Testis (tissue), 5 donors: ENCODE measurements at regions of chr17 and their contacts with region 1.

Region 1: GRCh38 chr17:17681187-17681848 is at the start of gene RAI1:
- DNase-seq: peak; percentile 81
- H3K4me3 ChIP-seq: peak within 1 kb of the TSS; percentile 73 to 86
- H3K27ac ChIP-seq: peak within 1 kb of the TSS; percentile 93 to 95
- H3K4me1 ChIP-seq: peaks cover 33% of the 10 kb centered on the region
- H3K27me3 ChIP-seq: no peaks in the 10 kb centered on the region
- CTCF ChIP-seq: peak; percentile 75 to 97 (median 93)
- POLR2A ChIP-seq: no peak
- total RNA-seq, gene RAI1: 42.8 to 44.5 TPM

Region 2: GRCh38 chr17:17812211-17813057 is 131.1 kb after region 1 on chr17:
- intact Hi-C with region 1: loop called (anchors 5 kb)
- DNase-seq: peak; percentile 81
- H3K4me3 ChIP-seq: peak overlapping the region; percentile 21 to 47
- H3K27ac ChIP-seq: peak overlapping the region; percentile 47 to 50
- H3K4me1 ChIP-seq: peaks cover 28% of the 10 kb centered on the region
- H3K27me3 ChIP-seq: no peaks in the 10 kb centered on the region
- CTCF ChIP-seq: peak; percentile 99 to 100 (median 99)
- POLR2A ChIP-seq: no peak

Region 3: DNA sequence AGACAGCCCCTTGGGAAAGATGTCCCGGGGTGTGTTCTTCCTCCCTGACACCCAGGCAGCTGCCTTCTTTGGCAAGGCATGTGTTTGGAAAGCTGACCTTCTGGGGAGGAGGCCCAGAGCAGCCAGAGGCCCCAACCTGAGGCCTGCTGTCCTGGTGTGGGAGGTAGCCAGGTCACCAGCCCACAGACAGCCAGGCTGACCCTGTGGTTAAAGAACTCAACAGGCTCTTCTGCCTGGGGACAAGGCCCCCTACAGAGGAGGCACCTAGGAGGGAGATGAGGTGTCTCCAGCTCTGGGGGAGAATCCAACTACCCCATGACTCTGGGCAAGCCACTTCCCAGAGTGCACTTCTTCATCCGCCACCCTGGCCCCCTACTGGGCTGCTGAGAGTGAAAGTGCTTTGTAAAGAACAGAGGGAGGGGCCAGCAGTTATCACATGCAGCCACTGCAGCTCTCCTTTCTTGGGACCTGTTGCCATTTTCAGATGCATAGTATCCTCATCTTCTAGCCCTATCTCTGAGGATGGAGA is 168.6 kb after region 1 on chr17:
- intact Hi-C with region 1: loop called (anchors 5 kb)
- DNase-seq: peak; percentile 82
- H3K4me3 ChIP-seq: no peak overlapping the region
- H3K27ac ChIP-seq: peak overlapping the region; percentile 47 to 59
- H3K4me1 ChIP-seq: peaks cover 37% of the 10 kb centered on the region
- H3K27me3 ChIP-seq: no peaks in the 10 kb centered on the region
- CTCF ChIP-seq: peak in 2 of 3 experiments; percentile 13 to 44
- POLR2A ChIP-seq: peak; percentile 2

Region 4: DNA sequence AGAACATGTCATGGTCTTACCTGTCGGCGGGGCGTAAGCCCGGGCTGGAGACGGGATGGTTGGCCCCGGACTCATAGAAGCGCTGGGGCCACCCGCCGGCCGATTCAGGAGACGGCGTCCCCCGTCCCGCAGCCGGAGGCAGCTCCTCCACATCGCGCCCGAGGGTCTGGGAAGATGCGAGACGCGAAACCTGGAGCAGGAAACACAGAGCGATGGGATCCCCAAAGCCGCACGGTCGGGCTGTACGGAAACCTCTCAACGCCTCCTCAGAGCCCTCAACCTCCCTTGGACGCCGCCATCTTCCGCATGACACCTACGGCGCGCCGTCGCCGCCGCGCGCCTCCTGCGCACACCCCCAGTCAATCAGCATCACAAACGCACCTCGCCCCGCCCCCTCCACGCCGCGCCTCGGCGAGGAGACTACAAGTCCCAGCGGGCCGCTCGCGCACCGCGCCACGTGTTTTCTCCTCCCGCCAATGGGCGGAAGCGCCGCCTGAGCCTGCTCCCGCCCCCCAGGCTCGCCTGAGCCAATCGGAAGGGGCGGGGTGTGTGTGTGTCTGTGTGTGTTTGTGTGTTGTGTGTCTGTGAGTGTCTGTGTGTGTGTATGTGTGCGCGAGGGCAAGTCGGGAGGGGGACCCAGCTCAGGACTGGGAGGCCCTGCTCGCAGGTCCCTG is 357.7 kb after region 1 on chr17 and contains the starts of genes ATPAF2 and GID4:
- intact Hi-C with region 1: loop called (anchors 10 kb)
- DNase-seq: peak; percentile 100
- H3K4me3 ChIP-seq: peak within 1 kb of the TSS; percentile 75 to 83
- H3K27ac ChIP-seq: peak within 1 kb of the TSS; percentile 82 to 83
- H3K4me1 ChIP-seq: peaks cover 24% of the 10 kb centered on the region
- H3K27me3 ChIP-seq: no peaks in the 10 kb centered on the region
- CTCF ChIP-seq: peak in 1 of 3 experiments; percentile 15
- POLR2A ChIP-seq: no peak
- total RNA-seq, gene ATPAF2: 42.6 to 63.3 TPM
- total RNA-seq, gene GID4: 28.6 to 36.1 TPM